ENCODE measurements at regions of chr6 and their contacts with region 1.

Region 1: DNA sequence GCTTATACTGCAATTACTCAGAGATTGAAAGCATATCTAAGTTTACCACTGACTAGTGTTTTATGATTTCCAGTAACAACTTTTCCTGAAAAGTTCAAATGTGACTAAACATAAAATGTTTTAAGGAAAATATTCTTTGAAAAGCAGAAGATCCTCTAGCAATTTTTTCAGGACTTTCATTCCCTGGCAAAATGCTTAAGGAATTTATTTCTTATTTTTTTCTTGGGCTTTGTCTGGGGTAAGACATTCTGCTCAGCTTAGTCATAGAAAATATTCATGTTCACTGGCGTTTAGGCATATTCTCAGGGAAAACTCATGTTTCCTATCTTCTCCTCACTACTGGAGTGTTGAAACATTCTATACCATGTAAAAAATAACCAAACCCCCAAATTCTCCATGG is 235.3 kb upstream of the CEP162 start:
- DNase-seq: no peak
- H3K4me3 ChIP-seq: no peak overlapping the region
- H3K27ac ChIP-seq: peak overlapping the region; percentile 28 to 44
- H3K4me1 ChIP-seq: peaks cover 0 to 9% of the 10 kb centered on the region in 2 donors
- H3K27me3 ChIP-seq: no peaks in the 10 kb centered on the region
- CTCF ChIP-seq: no peak

Region 2: GRCh38 chr6:84432619-84433018 is 30.1 kb before region 1 on chr6:
- intact Hi-C with region 1: no loop called
- DNase-seq: no peak
- H3K4me3 ChIP-seq: no peak overlapping the region
- H3K27ac ChIP-seq: no peak overlapping the region
- H3K4me1 ChIP-seq: no peaks in the 10 kb centered on the region
- H3K27me3 ChIP-seq: no peaks in the 10 kb centered on the region
- CTCF ChIP-seq: no peak

Region 3: GRCh38 chr6:84515067-84515466 is 52.4 kb after region 1 on chr6:
- intact Hi-C with region 1: loop called (anchors 5 kb)
- DNase-seq: no peak
- H3K4me3 ChIP-seq: peak overlapping the region in 1 of 2 donors; percentile 28
- H3K27ac ChIP-seq: peak overlapping the region; percentile 68 to 73
- H3K4me1 ChIP-seq: peaks cover 0 to 29% of the 10 kb centered on the region in 2 donors
- H3K27me3 ChIP-seq: no peaks in the 10 kb centered on the region
- CTCF ChIP-seq: no peak

Region 4: DNA sequence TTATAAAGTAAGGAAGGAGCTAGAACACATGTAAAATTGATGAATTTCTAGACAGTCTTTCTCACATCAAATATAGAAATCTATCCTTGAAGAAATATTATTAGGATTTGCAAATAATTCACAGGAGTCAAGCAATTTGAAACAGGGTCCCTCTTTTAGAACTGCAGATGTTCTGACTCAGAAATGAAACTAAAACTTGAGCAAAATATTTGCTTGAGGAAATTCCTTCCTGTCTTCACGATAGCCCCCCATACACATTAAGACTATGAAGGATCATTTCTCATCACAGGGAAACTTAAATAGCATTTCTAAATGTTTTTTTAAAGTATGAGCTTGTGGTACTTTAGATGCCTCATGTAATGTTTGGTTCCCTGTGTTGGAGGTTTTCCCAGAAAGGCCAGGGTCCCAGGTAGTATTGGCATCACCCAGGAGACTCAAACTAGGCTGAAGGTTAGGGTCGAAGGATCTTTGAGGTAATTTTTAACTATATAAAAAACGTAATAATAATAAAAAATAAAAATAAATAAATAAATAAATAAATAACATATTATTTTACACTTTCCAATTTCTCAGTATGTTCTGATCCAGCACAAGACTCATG is 445.7 kb after region 1 on chr6:
- intact Hi-C with region 1: no loop called
- DNase-seq: no peak
- H3K4me3 ChIP-seq: no peak overlapping the region
- H3K27ac ChIP-seq: no peak overlapping the region
- H3K4me1 ChIP-seq: no peaks in the 10 kb centered on the region
- H3K27me3 ChIP-seq: no peaks in the 10 kb centered on the region
- CTCF ChIP-seq: no peak

Region 5: DNA sequence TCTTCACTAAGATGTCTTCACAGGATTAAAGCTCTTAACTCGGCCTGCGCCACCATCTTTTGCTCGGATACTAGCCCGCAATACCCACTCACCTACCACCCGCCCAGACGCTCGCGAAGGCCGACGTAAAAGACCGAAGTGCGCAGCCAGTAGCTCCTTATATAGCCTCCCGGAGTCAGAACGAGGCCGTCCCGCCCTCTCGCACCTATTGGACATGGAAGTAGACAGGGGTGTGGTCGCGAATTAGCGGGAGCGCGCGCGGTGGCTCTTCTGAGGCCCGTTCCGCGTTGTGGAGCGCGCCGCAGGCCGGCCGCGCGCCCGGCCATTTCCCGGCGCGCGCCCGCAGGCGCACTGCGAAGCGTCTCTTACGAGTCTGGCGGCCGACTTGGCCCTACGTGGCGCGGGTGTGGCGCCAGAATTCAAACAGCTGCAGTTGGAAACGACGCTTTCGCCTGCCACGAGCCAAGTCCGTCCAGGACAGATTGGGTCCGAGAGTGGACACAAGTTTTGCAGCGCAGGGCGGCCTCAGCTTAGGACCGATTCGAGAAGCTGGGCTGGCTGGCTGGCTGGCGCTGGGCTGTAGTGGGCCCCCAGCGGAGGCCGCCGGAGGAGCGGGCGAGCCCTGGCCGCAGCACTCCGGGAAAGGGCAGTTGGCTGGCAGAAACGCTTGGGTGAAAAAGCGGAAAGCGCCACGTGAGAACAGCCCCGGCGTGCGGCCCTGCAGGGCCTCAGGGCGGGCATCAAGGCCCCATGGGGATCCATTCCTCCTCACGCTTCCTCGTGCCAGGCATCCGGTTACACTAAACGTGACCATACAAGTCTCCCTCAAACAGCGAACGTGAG is 1216.1 kb after region 1 on chr6:
- intact Hi-C with region 1: no loop called
- DNase-seq: peak; percentile 96 to 99
- H3K4me3 ChIP-seq: peak overlapping the region; percentile 90
- H3K27ac ChIP-seq: peak overlapping the region; percentile 91 to 94
- H3K4me1 ChIP-seq: peaks cover 0 to 21% of the 10 kb centered on the region in 2 donors
- H3K27me3 ChIP-seq: no peaks in the 10 kb centered on the region
- CTCF ChIP-seq: no peak

Measured in ascending aorta (tissue), 2 donors.